K562 (cell line): ENCODE measurements at regions of chr1 and their contacts with region 1.

Region 1: DNA sequence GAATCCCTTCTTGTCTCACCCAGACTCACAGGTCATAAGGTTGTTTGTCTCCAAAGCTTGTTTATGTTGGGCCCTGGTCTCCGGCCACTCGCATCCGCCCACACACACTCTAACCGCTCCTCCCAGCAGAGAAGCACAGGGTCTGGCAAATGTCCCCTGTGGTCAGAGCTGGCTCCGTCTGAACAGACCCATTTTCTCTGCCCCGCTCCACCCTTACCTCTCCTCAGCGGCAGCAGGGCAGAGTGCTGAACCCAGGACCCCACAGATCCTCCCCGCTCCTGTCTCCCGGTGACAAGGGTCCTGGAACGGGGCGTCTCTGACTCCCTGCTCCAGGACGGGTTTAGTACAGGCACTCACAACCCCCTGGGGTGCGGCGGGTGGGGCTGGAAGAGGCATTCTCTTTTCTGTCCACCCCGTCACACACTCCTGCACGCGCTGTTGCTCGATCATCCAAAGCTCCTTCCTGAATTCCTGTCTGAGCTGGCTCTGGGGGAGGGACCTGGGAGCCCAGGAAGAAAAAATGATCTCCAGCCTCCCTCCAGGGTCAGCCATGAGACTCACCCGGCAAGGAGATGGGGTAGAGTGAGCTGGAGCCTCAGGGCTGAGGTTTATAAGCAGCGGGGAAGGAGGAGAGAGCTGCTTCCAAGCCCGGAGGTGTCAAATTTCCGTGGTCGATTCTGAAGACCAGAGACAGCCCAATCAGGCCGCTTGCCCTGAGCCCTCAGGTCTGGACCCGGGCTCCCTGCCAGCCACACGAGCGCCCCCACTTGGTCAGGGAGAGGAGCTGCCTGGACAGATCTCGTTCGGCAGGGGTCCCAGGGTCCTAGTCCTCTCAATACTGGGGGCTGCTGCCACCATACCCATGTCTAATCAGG is at the start of gene S100A13:
- DNase-seq: peak; percentile 80 to 96 (median 88)
- ATAC-seq: peak; percentile 93
- H3K4me3 ChIP-seq: peak within 1 kb of the TSS; percentile 49
- H3K27ac ChIP-seq: peak within 1 kb of the TSS; percentile 82
- H3K4me1 ChIP-seq: peaks cover 26 to 44% of the 10 kb centered on the region in 2 experiments
- H3K27me3 ChIP-seq: no peaks in the 10 kb centered on the region
- CTCF ChIP-seq: peak; percentile 85 to 95 (median 89)
- EP300 ChIP-seq: peak; percentile 31; the same call in 1 of the 2 replicates
- POLR2A ChIP-seq: peak; percentile 92
- RAD21 ChIP-seq: peak; percentile 33 to 67; a peak in 3 of 4 replicates
- polyA plus RNA-seq, gene S100A13: 128 to 129 TPM

Region 2: DNA sequence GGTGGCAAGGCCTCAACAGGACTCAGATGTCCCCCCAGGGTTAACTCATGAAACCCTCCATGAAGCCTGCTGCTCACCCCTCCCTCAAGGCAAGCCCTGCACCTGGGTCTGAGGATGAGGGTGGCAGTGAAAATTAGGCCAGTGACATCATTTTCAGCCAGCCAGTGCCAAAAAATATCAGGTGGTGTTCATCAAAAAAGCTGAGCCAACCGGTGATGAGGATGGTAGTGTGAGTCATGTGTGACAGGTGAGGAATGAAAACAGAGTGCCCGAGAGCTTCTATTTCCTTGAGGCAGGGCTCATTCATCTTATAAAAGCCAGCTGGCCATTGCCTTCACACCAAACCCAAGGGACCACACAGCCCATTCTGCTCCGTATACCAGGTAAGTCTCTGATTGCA is 643.4 kb before region 1 on chr1 and contains the start of gene SPRR1A:
- CTCF ChIA-PET with region 1: no interaction called
- POLR2A ChIA-PET with region 1: no interaction called
- in situ Hi-C with region 1: no loop called
- intact Hi-C with region 1: no loop called
- DNase-seq: no peak
- ATAC-seq: no peak
- H3K4me3 ChIP-seq: no peak within 1 kb of the TSS
- H3K27ac ChIP-seq: no peak within 1 kb of the TSS
- H3K4me1 ChIP-seq: no peaks in the 10 kb centered on the region
- H3K27me3 ChIP-seq: peaks cover 0 to 10% of the 10 kb centered on the region in 2 experiments; a peak in 3 of 5 replicates
- CTCF ChIP-seq: no peak
- EP300 ChIP-seq: no peak
- POLR2A ChIP-seq: no peak
- RAD21 ChIP-seq: no peak
- polyA plus RNA-seq, gene SPRR1A: not detected

Region 3: GRCh38 chr1:153550827-153551500 is 76.2 kb before region 1 on chr1:
- CTCF ChIA-PET with region 1: no interaction called
- POLR2A ChIA-PET with region 1: no interaction called
- in situ Hi-C with region 1: no loop called
- intact Hi-C with region 1: no loop called
- DNase-seq: no peak
- ATAC-seq: no peak
- H3K4me3 ChIP-seq: no peak overlapping the region
- H3K27ac ChIP-seq: no peak overlapping the region
- H3K4me1 ChIP-seq: peaks cover 37 to 45% of the 10 kb centered on the region in 2 experiments; a peak in 4 of 5 replicates
- H3K27me3 ChIP-seq: no peaks in the 10 kb centered on the region
- CTCF ChIP-seq: no peak
- EP300 ChIP-seq: no peak
- POLR2A ChIP-seq: no peak
- RAD21 ChIP-seq: no peak

Region 4: GRCh38 chr1:153568367-153569099 is 58.6 kb before region 1 on chr1:
- CTCF ChIA-PET with region 1: no interaction called
- POLR2A ChIA-PET with region 1: interaction called, 4 read pairs
- in situ Hi-C with region 1: no loop called
- intact Hi-C with region 1: loop called (anchors 2 kb)
- DNase-seq: peak; percentile 89 to 92 (median 90)
- ATAC-seq: peak; percentile 81
- H3K4me3 ChIP-seq: no peak overlapping the region
- H3K27ac ChIP-seq: peak overlapping the region; percentile 63; the same call in 2 of the 3 replicates
- H3K4me1 ChIP-seq: peaks cover 38% of the 10 kb centered on the region in 2 experiments
- H3K27me3 ChIP-seq: no peaks in the 10 kb centered on the region
- CTCF ChIP-seq: peak; percentile 97 to 98 (median 98)
- EP300 ChIP-seq: peak; percentile 49; the same call in 1 of the 2 replicates
- POLR2A ChIP-seq: no peak
- RAD21 ChIP-seq: peak; percentile 99

Region 5: GRCh38 chr1:153608742-153609584 is 18.2 kb before region 1 on chr1:
- CTCF ChIA-PET with region 1: no interaction called
- POLR2A ChIA-PET with region 1: interaction called, 70 read pairs
- in situ Hi-C with region 1: no loop called
- intact Hi-C with region 1: no loop called
- DNase-seq: peak; percentile 90 to 95 (median 94)
- ATAC-seq: peak; percentile 94
- H3K4me3 ChIP-seq: no peak overlapping the region
- H3K27ac ChIP-seq: peak overlapping the region; percentile 50; the same call in 2 of the 3 replicates
- H3K4me1 ChIP-seq: peaks cover 30 to 47% of the 10 kb centered on the region in 2 experiments
- H3K27me3 ChIP-seq: no peaks in the 10 kb centered on the region
- CTCF ChIP-seq: no peak
- EP300 ChIP-seq: peak; percentile 37; the same call in 1 of the 2 replicates
- POLR2A ChIP-seq: peak; percentile 42; the same call in 1 of the 2 replicates
- RAD21 ChIP-seq: no peak

Region 6: DNA sequence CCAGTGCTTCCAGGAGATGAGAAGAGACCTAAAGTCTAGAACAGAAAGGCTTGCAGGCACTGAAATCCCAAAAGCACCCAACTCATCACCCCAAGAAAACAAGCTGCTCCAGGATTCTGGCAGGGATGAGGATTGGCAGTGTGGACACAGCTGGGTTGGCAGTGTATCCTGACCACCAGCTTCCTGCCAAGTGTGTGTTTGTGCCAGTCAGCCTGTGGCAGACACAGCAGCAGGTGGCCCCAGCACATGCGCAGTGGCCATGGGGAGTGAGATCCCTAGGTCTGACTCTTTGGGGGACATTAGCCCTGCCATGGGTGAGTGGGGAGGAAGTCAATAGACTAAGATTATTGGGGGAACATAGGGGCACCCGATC is 22.7 kb after region 1 on chr1:
- CTCF ChIA-PET with region 1: no interaction called
- POLR2A ChIA-PET with region 1: interaction called, 18 read pairs
- in situ Hi-C with region 1: no loop called
- intact Hi-C with region 1: no loop called
- DNase-seq: no peak
- ATAC-seq: no peak
- H3K4me3 ChIP-seq: no peak overlapping the region
- H3K27ac ChIP-seq: no peak overlapping the region
- H3K4me1 ChIP-seq: peaks cover 14% of the 10 kb centered on the region in 2 experiments
- H3K27me3 ChIP-seq: no peaks in the 10 kb centered on the region
- CTCF ChIP-seq: no peak
- EP300 ChIP-seq: no peak
- POLR2A ChIP-seq: no peak
- RAD21 ChIP-seq: no peak

Region 7: GRCh38 chr1:153734396-153735089 is 107.4 kb after region 1 on chr1:
- CTCF ChIA-PET with region 1: no interaction called
- POLR2A ChIA-PET with region 1: no interaction called
- in situ Hi-C with region 1: no loop called
- intact Hi-C with region 1: no loop called
- DNase-seq: no peak
- ATAC-seq: no peak
- H3K4me3 ChIP-seq: no peak overlapping the region
- H3K27ac ChIP-seq: no peak overlapping the region
- H3K4me1 ChIP-seq: peaks cover 0 to 2% of the 10 kb centered on the region in 2 experiments; a peak in 1 of 5 replicates
- H3K27me3 ChIP-seq: no peaks in the 10 kb centered on the region
- CTCF ChIP-seq: no peak
- EP300 ChIP-seq: no peak
- POLR2A ChIP-seq: no peak
- RAD21 ChIP-seq: no peak